HCT116 (cell line): ENCODE measurements at regions of chr7 and their contacts with region 1.

Region 1: DNA sequence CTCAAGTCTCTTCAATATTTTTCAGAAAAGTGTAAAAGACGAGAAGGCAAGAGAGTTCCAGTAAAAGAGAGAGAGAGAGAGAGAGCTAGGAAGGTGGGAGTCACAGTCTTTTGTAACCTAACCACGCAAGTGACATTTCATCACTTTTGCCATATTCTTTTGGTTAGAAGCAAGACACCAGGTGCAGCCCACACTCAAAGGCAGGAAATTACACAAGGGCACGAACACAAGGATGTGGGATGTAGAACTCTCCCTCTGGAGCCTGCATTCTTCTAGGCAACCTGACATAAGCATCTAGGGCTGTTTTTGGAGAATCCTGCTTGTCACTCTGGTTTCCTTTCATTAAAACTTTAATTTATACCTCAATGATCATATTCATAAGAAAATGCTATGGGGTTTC is 1213.1 kb downstream of the DNAJB9 start:
- DNase-seq: no peak
- ATAC-seq: no peak
- H3K4me3 ChIP-seq: no peak overlapping the region
- H3K27ac ChIP-seq: no peak overlapping the region
- H3K4me1 ChIP-seq: no peaks in the 10 kb centered on the region
- H3K27me3 ChIP-seq: no peaks in the 10 kb centered on the region
- CTCF ChIP-seq: no peak
- POLR2A ChIP-seq: no peak
- RAD21 ChIP-seq: no peak

Region 2: GRCh38 chr7:108973075-108973474 is 809.7 kb before region 1 on chr7:
- CTCF ChIA-PET with region 1: no interaction called
- POLR2A ChIA-PET with region 1: no interaction called
- RAD21 ChIA-PET with region 1: no interaction called
- intact Hi-C with region 1: loop called (anchors 10 kb)
- DNase-seq: peak; percentile 28
- ATAC-seq: peak; percentile 71
- H3K4me3 ChIP-seq: no peak overlapping the region
- H3K27ac ChIP-seq: no peak overlapping the region
- H3K4me1 ChIP-seq: no peaks in the 10 kb centered on the region
- H3K27me3 ChIP-seq: no peaks in the 10 kb centered on the region
- CTCF ChIP-seq: peak; percentile 30 to 38 (median 33); a peak in 5 of 6 replicates
- POLR2A ChIP-seq: no peak
- RAD21 ChIP-seq: peak; percentile 73

Region 3: DNA sequence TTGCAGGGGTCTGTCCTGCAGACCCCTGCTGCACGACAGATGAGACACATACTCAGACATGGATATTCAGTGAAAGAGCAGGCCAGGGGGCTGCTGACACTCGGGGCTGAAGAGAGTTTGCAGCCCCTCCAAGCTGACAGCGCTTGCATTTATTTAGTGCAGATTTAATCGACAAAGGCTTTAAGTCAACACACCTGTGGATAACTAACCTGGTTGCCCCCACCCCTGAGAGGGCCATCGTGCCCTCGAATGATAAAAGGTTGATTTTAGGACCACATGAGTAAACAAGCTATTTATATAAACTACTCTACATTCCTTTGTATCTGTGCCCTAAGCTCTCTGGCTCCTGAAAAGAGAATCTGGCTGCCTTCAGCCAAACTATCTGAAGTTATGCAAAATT is 599.9 kb after region 1 on chr7:
- CTCF ChIA-PET with region 1: no interaction called
- POLR2A ChIA-PET with region 1: no interaction called
- RAD21 ChIA-PET with region 1: no interaction called
- intact Hi-C with region 1: no loop called
- DNase-seq: no peak
- ATAC-seq: no peak
- H3K4me3 ChIP-seq: no peak overlapping the region
- H3K27ac ChIP-seq: no peak overlapping the region
- H3K4me1 ChIP-seq: peaks cover 15 to 23% of the 10 kb centered on the region in 2 experiments
- H3K27me3 ChIP-seq: no peaks in the 10 kb centered on the region
- CTCF ChIP-seq: no peak
- POLR2A ChIP-seq: no peak
- RAD21 ChIP-seq: no peak